IMR-90 (cell line): ENCODE measurements at regions of chr10 and their contacts with region 1.

Region 1: DNA sequence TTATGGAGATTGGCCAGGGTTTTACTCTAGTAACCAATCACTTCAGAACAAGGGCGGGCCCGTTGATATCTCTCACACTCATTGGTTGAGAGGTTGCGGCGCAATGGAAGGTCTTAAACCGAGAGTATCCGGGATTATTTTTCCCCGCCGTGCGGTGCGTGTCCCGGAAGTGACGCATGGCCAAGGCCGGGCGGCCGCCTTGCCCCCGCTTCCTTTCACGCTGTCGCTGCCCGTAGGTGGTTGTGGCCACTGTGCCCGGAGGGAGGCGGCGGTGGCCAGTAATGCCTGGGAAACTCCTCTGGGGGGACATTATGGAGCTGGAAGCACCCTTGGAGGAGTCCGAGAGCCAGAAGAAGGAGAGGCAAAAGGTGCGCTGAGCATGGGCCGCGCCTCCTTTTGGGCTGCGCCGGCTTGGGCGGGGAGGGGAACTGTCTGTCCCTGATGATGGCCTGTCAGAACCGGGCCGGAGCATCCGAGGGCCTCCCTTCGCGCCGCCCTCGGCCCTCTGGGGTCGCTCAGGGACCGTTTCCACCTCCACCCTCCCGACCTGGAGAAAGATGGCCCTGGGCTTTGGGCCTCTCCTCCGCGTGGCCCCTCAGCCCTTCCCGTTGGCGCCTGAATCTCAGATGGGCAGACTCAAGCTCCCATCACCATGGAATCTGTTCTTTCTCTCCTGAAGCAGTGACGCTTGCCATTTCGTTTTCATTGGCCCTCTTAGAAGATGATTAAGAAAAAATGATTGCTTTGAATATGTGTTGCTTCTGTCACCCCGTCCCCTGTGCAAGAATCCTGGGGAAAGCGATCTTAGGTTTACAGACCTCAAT is at the start of gene DDX50:
- DNase-seq: peak; percentile 99
- ATAC-seq: peak; percentile 96
- H3K4me3 ChIP-seq: peak within 1 kb of the TSS; percentile 86
- H3K27ac ChIP-seq: peak within 1 kb of the TSS; percentile 94
- H3K4me1 ChIP-seq: no peaks in the 10 kb centered on the region; the same call in 1 of the 2 replicates
- H3K27me3 ChIP-seq: no peaks in the 10 kb centered on the region
- CTCF ChIP-seq: peak; percentile 20; the same call in 1 of the 2 replicates
- POLR2A ChIP-seq: peak; percentile 97
- RAD21 ChIP-seq: no peak
- total RNA-seq, gene DDX50: 55.7 and 74.2 TPM in 2 replicates

Region 2: GRCh38 chr10:67849331-67850011 is 1051.8 kb before region 1 on chr10:
- CTCF ChIA-PET with region 1: no interaction called
- POLR2A ChIA-PET with region 1: no interaction called
- dilution Hi-C with region 1: no loop called
- in situ Hi-C with region 1: no loop called
- intact Hi-C with region 1: loop called (anchors 10 kb)
- DNase-seq: peak; percentile 95
- ATAC-seq: peak; percentile 98
- H3K4me3 ChIP-seq: peak overlapping the region; percentile 61
- H3K27ac ChIP-seq: peak overlapping the region; percentile 87
- H3K4me1 ChIP-seq: no peaks in the 10 kb centered on the region
- H3K27me3 ChIP-seq: no peaks in the 10 kb centered on the region
- CTCF ChIP-seq: no peak
- POLR2A ChIP-seq: no peak
- RAD21 ChIP-seq: no peak

Region 3: GRCh38 chr10:68752711-68753350 is 148.5 kb before region 1 on chr10:
- CTCF ChIA-PET with region 1: no interaction called
- POLR2A ChIA-PET with region 1: no interaction called
- dilution Hi-C with region 1: loop called (anchors 25 kb)
- in situ Hi-C with region 1: no loop called
- intact Hi-C with region 1: no loop called
- DNase-seq: no peak
- ATAC-seq: no peak
- H3K4me3 ChIP-seq: no peak overlapping the region
- H3K27ac ChIP-seq: no peak overlapping the region
- H3K4me1 ChIP-seq: no peaks in the 10 kb centered on the region
- H3K27me3 ChIP-seq: no peaks in the 10 kb centered on the region
- CTCF ChIP-seq: no peak
- POLR2A ChIP-seq: no peak
- RAD21 ChIP-seq: no peak

Region 4: DNA sequence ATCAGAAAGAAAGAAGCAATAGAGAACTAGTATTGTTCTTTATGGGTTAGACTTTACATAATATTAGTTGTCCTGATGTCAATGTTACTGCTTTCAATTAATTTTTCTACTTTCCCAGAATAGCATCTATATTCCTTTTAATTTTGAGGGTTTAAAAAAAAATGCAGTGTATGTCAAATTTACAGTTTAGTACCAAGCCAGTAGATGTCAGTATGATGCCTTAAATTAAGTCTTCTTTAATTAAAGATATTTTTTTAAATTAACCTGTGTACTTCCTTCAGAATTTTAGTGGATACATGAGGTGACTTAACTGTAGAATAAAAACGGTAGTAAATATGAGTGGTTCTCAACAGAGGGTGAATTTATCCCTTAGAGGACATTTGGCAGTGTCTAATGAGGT is 109.2 kb before region 1 on chr10:
- CTCF ChIA-PET with region 1: interaction called, 3 read pairs
- POLR2A ChIA-PET with region 1: no interaction called
- dilution Hi-C with region 1: no loop called
- in situ Hi-C with region 1: no loop called
- intact Hi-C with region 1: loop called (anchors 1 kb)
- DNase-seq: peak; percentile 30
- ATAC-seq: no peak
- H3K4me3 ChIP-seq: no peak overlapping the region
- H3K27ac ChIP-seq: no peak overlapping the region
- H3K4me1 ChIP-seq: no peaks in the 10 kb centered on the region
- H3K27me3 ChIP-seq: no peaks in the 10 kb centered on the region
- CTCF ChIP-seq: peak; percentile 39
- POLR2A ChIP-seq: no peak
- RAD21 ChIP-seq: peak; percentile 41

Region 5: DNA sequence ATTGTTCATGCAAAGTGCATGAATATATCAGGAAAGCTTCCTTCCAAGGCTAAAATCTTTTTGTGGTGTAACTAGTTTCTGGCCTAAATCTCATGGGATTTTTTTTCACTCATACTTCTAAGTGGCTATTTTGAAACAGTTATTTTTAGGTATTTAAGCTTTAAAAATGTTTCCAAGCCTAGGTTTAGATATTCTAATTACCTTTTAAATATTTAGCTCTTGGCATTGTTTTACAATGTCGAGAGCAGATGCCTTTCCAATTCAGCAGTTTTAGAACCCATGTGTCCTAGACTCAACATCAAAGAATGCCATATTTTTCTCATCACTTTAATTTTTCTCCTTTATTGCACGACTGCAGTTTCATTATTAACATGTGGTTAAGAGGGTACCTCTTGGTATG is 101.1 kb before region 1 on chr10:
- CTCF ChIA-PET with region 1: no interaction called
- POLR2A ChIA-PET with region 1: no interaction called
- dilution Hi-C with region 1: no loop called
- in situ Hi-C with region 1: loop called (anchors 5 kb)
- intact Hi-C with region 1: no loop called
- DNase-seq: no peak
- ATAC-seq: no peak
- H3K4me3 ChIP-seq: no peak overlapping the region
- H3K27ac ChIP-seq: no peak overlapping the region
- H3K4me1 ChIP-seq: no peaks in the 10 kb centered on the region
- H3K27me3 ChIP-seq: no peaks in the 10 kb centered on the region
- CTCF ChIP-seq: no peak
- POLR2A ChIP-seq: no peak
- RAD21 ChIP-seq: no peak

Region 6: DNA sequence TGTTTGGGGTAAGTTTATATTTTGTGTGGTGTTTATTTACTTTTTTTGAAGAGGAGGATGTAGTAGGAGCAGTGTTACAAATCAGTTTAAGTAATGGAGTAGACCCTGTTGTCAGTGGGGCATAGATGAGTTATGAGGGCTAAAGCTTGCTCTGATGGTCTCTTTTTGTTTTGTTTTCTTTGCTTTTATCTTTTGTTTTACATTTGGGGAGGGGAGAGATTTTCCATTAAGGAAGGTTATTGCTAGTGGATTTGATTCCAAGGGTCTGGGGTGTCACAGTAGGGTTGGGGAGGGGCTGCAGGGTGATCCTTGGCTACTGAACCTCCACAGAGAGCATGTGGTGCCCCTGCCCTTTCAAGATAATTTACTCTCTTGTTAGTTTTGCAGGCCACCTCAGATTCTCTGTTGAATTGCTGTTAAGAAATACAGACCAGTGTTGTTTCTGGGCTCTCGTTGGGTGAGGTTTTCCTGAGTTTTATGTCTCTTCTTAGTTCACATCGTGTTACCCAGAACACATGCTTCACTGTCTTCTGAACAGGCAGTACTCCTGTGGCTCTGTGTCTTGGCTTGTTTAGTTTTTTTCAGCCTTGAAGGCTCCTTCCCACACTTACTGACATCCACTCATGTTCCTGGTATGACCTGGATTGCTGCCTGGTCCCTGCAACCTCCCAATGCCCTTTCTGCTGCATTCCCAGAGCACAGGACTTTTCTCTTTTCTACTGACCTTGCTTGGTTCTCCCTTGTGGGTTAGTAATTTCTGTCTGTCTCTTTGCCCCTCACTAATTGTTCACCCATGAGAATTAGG is 91.5 kb after region 1 on chr10:
- CTCF ChIA-PET with region 1: no interaction called
- POLR2A ChIA-PET with region 1: no interaction called
- dilution Hi-C with region 1: no loop called
- in situ Hi-C with region 1: no loop called
- intact Hi-C with region 1: no loop called
- DNase-seq: peak; percentile 97
- ATAC-seq: peak; percentile 65
- H3K4me3 ChIP-seq: no peak overlapping the region
- H3K27ac ChIP-seq: peak overlapping the region; percentile 79
- H3K4me1 ChIP-seq: peaks cover 13% of the 10 kb centered on the region
- H3K27me3 ChIP-seq: no peaks in the 10 kb centered on the region
- CTCF ChIP-seq: no peak
- POLR2A ChIP-seq: no peak
- RAD21 ChIP-seq: no peak